Activated T-helper 1 cell treated with anti-CD3 and anti-CD28 coated beads, Interleukin-12 subunit alpha, Interleukin-12 subunit beta, Interleukin-2, Interleukin-4 antibody, amounts not matched to agents 30 ng/mL and 10 ng/mL and 1 ng/mL, durations not matched to agents 14 hours and 24 hours and 36 hours (primary cell): ENCODE measurements at regions of chr19 and their contacts with region 1.

Region 1: GRCh38 chr19:46487802-46488445 is 7.7 kb downstream of the PNMA8B start:
- DNase-seq: peak; percentile 61
- H3K4me3 Mint-ChIP-seq: no peak overlapping the region
- H3K27ac Mint-ChIP-seq: peak overlapping the region; percentile 67
- H3K4me1 Mint-ChIP-seq: no peaks in the 10 kb centered on the region
- H3K27me3 Mint-ChIP-seq: peaks cover 69% of the 10 kb centered on the region

Region 2: DNA sequence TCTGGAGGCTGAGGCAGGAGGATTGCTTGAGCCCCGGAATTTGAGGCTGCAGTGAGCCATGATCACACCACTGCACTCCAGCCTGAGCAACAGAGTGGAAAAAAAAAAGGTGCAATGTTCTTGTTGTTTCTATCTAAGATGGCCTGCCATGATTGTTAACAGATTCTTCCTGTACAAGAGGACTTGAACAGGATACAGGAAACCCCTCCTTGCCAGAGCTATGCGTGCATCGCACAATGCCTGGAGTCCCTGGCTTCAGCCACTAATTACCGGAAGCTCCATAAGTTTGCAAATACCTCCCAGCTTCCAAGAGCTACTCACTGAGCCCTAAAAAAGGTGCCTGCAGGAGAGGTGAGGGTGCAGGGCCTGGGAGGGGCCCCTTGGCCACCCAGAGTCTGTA is 204.2 kb before region 1 on chr19:
- intact Hi-C with region 1: loop called (anchors 1 kb)
- DNase-seq: no peak
- H3K4me3 Mint-ChIP-seq: no peak overlapping the region
- H3K27ac Mint-ChIP-seq: no peak overlapping the region
- H3K4me1 Mint-ChIP-seq: no peaks in the 10 kb centered on the region
- H3K27me3 Mint-ChIP-seq: peaks cover 6% of the 10 kb centered on the region

Region 3: GRCh38 chr19:46392243-46392801 is 95.6 kb before region 1 on chr19:
- intact Hi-C with region 1: loop called (anchors 1 kb)
- DNase-seq: no peak
- H3K4me3 Mint-ChIP-seq: no peak overlapping the region
- H3K27ac Mint-ChIP-seq: no peak overlapping the region
- H3K4me1 Mint-ChIP-seq: peaks cover 10% of the 10 kb centered on the region
- H3K27me3 Mint-ChIP-seq: no peaks in the 10 kb centered on the region

Region 4: GRCh38 chr19:46451352-46451751 is 36.6 kb before region 1 on chr19:
- intact Hi-C with region 1: no loop called
- DNase-seq: no peak
- H3K4me3 Mint-ChIP-seq: no peak overlapping the region
- H3K27ac Mint-ChIP-seq: no peak overlapping the region
- H3K4me1 Mint-ChIP-seq: no peaks in the 10 kb centered on the region
- H3K27me3 Mint-ChIP-seq: peaks cover 11% of the 10 kb centered on the region